Activated B cell treated with CpG ODN at 0.5 μM for 24 hours (primary cell): ENCODE measurements at regions of chr2 and their contacts with region 1.

Region 1: GRCh38 chr2:191677646-191678436 is at the start of gene NABP1:
- DNase-seq: peak; percentile 98
- ATAC-seq: peak; percentile 84
- H3K4me3 Mint-ChIP-seq: peak within 1 kb of the TSS; percentile 97
- H3K27ac Mint-ChIP-seq: peak within 1 kb of the TSS; percentile 99
- H3K4me1 Mint-ChIP-seq: peaks cover 64% of the 10 kb centered on the region
- H3K27me3 Mint-ChIP-seq: no peaks in the 10 kb centered on the region
- CTCF ChIP-seq: no peak
- total RNA-seq, gene NABP1: 69.6 and 86.0 TPM in 2 replicates

Region 2: DNA sequence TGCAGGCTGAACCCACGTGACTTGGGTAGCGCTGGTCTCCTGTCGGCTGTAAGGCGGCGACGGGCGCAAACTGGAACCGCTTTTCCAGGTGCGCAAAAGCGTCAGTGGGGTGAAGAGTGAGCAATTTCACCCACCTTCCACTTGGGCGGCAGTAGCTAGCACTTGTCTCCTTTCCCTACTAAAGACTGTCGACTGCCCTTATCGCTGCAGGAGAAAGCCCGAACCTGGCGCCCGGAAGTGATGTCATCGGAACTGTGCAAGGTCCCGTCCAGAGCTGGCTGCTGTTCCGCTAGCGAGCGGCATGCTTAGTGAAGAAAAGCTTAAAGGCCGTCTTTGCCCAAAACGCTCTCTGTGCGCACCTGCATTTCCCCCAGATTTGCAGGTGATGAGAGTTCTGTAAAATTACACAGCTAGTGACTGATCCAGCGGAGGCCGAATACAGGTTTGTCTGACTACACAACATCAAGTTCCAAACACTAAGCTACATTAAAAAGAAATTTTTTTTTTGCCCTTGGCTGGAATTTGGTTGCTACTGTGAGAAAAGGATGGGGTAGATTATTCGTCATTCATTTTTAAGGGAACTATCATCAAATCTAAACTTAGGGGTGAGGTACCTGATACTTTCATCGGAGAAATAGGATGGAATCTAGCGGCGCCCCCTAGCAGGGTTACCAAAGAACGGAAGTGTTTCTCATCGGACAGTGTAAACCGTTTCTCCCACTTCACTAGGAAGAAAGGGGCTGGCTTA is 1915.1 kb before region 1 on chr2 and contains the start of gene OSGEPL1:
- CTCF ChIA-PET with region 1: no interaction called
- POLR2A ChIA-PET with region 1: no interaction called
- intact Hi-C with region 1: loop called (anchors 5 kb)
- DNase-seq: peak; percentile 81
- ATAC-seq: peak; percentile 93
- H3K4me3 Mint-ChIP-seq: peak within 1 kb of the TSS; percentile 95
- H3K27ac Mint-ChIP-seq: peak within 1 kb of the TSS; percentile 97
- H3K4me1 Mint-ChIP-seq: peaks cover 8% of the 10 kb centered on the region
- H3K27me3 Mint-ChIP-seq: no peaks in the 10 kb centered on the region
- CTCF ChIP-seq: no peak
- total RNA-seq, gene OSGEPL1: 10.6 and 12.3 TPM in 2 replicates

Region 3: GRCh38 chr2:190648289-190649034 is 1029.4 kb before region 1 on chr2:
- CTCF ChIA-PET with region 1: no interaction called
- POLR2A ChIA-PET with region 1: no interaction called
- intact Hi-C with region 1: loop called (anchors 10 kb)
- DNase-seq: peak; percentile 91
- ATAC-seq: peak; percentile 77
- H3K4me3 Mint-ChIP-seq: peak overlapping the region; percentile 83
- H3K27ac Mint-ChIP-seq: peak overlapping the region; percentile 79
- H3K4me1 Mint-ChIP-seq: peaks cover 22% of the 10 kb centered on the region
- H3K27me3 Mint-ChIP-seq: no peaks in the 10 kb centered on the region
- CTCF ChIP-seq: no peak

Region 4: DNA sequence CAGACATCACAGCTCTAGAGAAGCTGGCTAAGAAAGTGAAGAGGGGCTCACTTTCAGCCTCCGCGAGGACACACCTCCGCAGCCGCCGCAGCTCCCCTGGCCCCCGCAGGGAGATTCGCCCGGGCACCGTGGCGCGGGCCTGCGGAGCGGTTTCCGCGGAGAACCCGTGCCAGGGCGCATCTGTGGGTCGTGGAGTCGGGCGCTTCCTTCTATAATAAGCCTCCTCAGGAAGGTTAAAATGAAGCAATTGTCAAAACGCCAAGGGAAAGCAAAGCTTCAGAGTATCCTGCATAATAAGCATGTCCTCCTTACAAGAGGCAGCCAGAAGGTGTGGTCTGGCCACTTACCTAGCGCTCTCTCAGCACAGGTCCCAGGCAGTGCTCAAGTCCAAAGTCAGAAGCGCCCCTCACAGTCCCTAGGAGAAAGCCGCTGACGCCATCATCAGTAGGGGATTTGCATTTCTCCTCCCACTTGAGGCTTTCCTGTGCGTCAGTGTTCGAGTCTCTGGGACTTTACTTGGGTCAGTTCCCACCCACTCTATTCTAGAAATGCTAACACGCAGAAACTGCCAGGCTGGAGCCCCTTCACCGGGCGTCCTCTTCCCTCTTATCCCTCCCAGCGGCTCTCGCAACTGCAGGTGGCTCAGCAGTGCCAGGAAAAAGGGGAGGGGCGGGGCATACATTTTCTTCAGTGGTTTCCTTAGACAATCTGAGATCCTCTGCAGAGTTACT is 527.1 kb before region 1 on chr2 and contains the start of gene STAT4:
- CTCF ChIA-PET with region 1: no interaction called
- POLR2A ChIA-PET with region 1: interaction called, 7 read pairs
- intact Hi-C with region 1: loop called (anchors 2 kb)
- DNase-seq: peak; percentile 55
- ATAC-seq: peak; percentile 92
- H3K4me3 Mint-ChIP-seq: peak within 1 kb of the TSS; percentile 89
- H3K27ac Mint-ChIP-seq: peak within 1 kb of the TSS; percentile 79
- H3K4me1 Mint-ChIP-seq: peaks cover 30% of the 10 kb centered on the region
- H3K27me3 Mint-ChIP-seq: peaks cover 8% of the 10 kb centered on the region
- CTCF ChIP-seq: no peak
- total RNA-seq, gene STAT4: 15.1 and 16.5 TPM in 2 replicates

Region 5: GRCh38 chr2:191611614-191612013 is 66.2 kb before region 1 on chr2:
- CTCF ChIA-PET with region 1: interaction called, 17 read pairs
- POLR2A ChIA-PET with region 1: interaction called, 380 read pairs
- intact Hi-C with region 1: loop called (anchors 1 kb)
- DNase-seq: no peak
- ATAC-seq: peak; percentile 97
- H3K4me3 Mint-ChIP-seq: peak overlapping the region; percentile 32
- H3K27ac Mint-ChIP-seq: peak overlapping the region; percentile 70
- H3K4me1 Mint-ChIP-seq: peaks cover 37% of the 10 kb centered on the region
- H3K27me3 Mint-ChIP-seq: no peaks in the 10 kb centered on the region
- CTCF ChIP-seq: no peak

Region 6: DNA sequence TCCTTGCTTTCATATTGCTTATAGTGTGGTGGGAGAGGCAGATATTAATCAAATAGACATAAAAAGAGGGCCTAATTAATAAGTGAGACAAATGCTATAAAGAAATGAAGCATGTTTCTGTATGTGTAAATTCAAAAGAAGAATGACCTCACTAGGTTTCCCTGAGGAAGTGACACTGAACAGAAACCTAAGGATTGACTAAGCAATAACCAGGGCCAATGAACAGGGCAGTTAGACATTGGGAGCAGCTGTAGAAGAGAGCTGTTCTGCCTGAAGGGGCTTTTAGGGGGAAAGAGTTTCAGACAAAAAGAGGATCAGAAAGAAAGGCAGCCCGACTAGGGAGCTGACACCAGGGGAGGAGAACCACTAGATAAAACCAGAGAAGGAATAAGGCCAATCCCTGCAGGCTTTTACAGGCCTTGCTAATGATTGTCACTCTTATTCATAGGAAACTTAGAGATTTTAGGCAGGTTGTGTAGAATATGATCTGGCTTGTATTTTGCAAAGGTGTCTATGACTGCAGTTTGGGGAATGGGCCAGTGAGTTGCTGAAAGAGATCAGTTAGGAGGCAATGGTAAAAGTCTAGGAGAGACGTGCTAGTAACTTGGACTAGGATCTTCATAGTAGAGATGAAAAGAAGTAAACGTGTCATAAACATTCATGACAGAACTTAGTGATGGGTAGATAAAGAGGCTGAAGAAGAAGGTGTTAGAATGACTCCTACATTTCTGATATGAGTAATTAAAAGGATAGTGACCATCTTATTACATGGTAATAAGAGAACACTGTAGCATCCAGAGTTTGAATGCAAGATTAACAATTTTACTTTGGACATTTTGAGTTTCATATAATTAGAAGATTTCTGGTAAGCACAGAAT is 26.7 kb before region 1 on chr2:
- CTCF ChIA-PET with region 1: no interaction called
- POLR2A ChIA-PET with region 1: interaction called, 32 read pairs
- intact Hi-C with region 1: loop called (anchors 1 kb)
- DNase-seq: no peak
- ATAC-seq: peak; percentile 83
- H3K4me3 Mint-ChIP-seq: no peak overlapping the region
- H3K27ac Mint-ChIP-seq: peak overlapping the region; percentile 38
- H3K4me1 Mint-ChIP-seq: peaks cover 14% of the 10 kb centered on the region
- H3K27me3 Mint-ChIP-seq: no peaks in the 10 kb centered on the region
- CTCF ChIP-seq: no peak

Region 7: DNA sequence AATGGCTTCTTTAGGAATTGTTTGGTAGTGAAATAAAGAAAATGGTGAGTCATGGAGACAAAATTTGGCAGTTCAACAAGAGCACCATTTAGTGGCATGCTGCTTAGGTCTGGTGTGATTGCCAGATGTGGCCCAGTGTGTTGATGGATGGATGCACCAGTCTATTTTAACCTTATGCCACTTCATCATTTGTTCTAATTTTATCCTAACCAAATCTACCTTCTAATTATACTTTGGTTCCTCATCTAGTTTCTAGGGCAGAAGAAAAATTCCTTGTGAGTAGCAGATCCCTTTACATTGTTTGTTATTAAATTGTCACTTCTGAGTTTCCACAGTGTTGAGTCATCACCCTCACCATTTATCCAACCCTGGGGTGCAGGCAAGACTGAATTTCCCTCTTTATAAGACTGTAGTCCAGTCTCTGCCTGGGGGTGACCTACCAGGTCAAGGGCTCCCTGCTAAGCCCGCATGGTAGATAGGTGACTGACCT is 32.6 kb after region 1 on chr2:
- CTCF ChIA-PET with region 1: no interaction called
- POLR2A ChIA-PET with region 1: no interaction called
- intact Hi-C with region 1: no loop called
- DNase-seq: no peak
- ATAC-seq: no peak
- H3K4me3 Mint-ChIP-seq: no peak overlapping the region
- H3K27ac Mint-ChIP-seq: no peak overlapping the region
- H3K4me1 Mint-ChIP-seq: no peaks in the 10 kb centered on the region
- H3K27me3 Mint-ChIP-seq: no peaks in the 10 kb centered on the region
- CTCF ChIP-seq: no peak